Sciatic nerve (tissue), 2 donors: ENCODE measurements at regions of chr1 and their contacts with region 1.

Region 1: GRCh38 chr1:21822349-21822748 is 10.3 kb downstream of the LDLRAD2 start:
- DNase-seq: no peak
- ATAC-seq: peak; percentile 54

Region 2: GRCh38 chr1:21289700-21290545 is 532.4 kb before region 1 on chr1 and contains the start of gene ECE1:
- intact Hi-C with region 1: loop called (anchors 10 kb)
- DNase-seq: no peak
- ATAC-seq: peak; percentile 70
- total RNA-seq, gene ECE1: 117 TPM